K562 (cell line): ENCODE measurements at regions of chr13 and their contacts with region 1.

Region 1: GRCh38 chr13:108033800-108034707 is 181.3 kb downstream of the LIG4 start:
- DNase-seq: no peak
- ATAC-seq: no peak
- H3K4me3 ChIP-seq: no peak overlapping the region
- H3K27ac ChIP-seq: no peak overlapping the region
- H3K4me1 ChIP-seq: no peaks in the 10 kb centered on the region
- H3K27me3 ChIP-seq: no peaks in the 10 kb centered on the region
- CTCF ChIP-seq: no peak
- EP300 ChIP-seq: no peak
- POLR2A ChIP-seq: no peak
- RAD21 ChIP-seq: no peak

Region 2: DNA sequence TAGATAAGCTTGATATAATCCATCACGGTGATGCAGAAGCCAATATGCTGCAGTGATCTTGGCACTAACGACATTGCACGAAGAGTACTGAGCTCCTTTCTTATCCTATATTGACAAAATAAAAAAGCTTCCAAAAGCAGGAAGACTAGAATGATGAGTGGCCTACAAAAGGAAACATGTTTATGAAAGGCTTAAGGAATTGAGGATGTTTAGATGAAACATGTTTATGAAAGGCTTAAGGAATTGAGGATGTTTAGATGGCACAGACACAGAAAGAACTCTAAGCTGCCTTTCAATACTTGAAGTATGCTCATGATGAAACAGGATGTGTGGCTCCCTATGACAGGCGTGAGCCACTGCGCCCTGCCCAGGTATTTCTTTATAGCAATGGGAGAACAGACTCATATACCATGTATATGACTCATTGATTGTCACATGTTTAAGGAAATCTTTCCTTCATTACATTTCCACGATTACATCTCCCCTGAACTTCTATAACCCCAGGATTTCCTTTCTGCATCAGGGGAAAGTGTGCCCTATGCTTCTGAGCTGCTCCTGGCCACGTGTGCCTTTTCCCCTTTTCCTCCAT is 775.4 kb before region 1 on chr13:
- CTCF ChIA-PET with region 1: no interaction called
- POLR2A ChIA-PET with region 1: no interaction called
- in situ Hi-C with region 1: loop called (anchors 10 kb)
- intact Hi-C with region 1: no loop called
- DNase-seq: no peak
- ATAC-seq: no peak
- H3K4me3 ChIP-seq: no peak overlapping the region
- H3K27ac ChIP-seq: no peak overlapping the region
- H3K4me1 ChIP-seq: no peaks in the 10 kb centered on the region
- H3K27me3 ChIP-seq: no peaks in the 10 kb centered on the region
- CTCF ChIP-seq: no peak
- EP300 ChIP-seq: no peak
- POLR2A ChIP-seq: no peak
- RAD21 ChIP-seq: no peak

Region 3: GRCh38 chr13:107807306-107808073 is 226.6 kb before region 1 on chr13:
- CTCF ChIA-PET with region 1: no interaction called
- POLR2A ChIA-PET with region 1: no interaction called
- in situ Hi-C with region 1: no loop called
- intact Hi-C with region 1: no loop called
- DNase-seq: no peak
- ATAC-seq: no peak
- H3K4me3 ChIP-seq: no peak overlapping the region
- H3K27ac ChIP-seq: no peak overlapping the region
- H3K4me1 ChIP-seq: no peaks in the 10 kb centered on the region
- H3K27me3 ChIP-seq: no peaks in the 10 kb centered on the region
- CTCF ChIP-seq: no peak
- EP300 ChIP-seq: no peak
- POLR2A ChIP-seq: no peak
- RAD21 ChIP-seq: no peak

Region 4: GRCh38 chr13:108200781-108201398 is 166.8 kb after region 1 on chr13:
- CTCF ChIA-PET with region 1: no interaction called
- POLR2A ChIA-PET with region 1: no interaction called
- in situ Hi-C with region 1: no loop called
- intact Hi-C with region 1: no loop called
- DNase-seq: no peak
- ATAC-seq: no peak
- H3K4me3 ChIP-seq: no peak overlapping the region
- H3K27ac ChIP-seq: no peak overlapping the region
- H3K4me1 ChIP-seq: no peaks in the 10 kb centered on the region
- H3K27me3 ChIP-seq: no peaks in the 10 kb centered on the region
- CTCF ChIP-seq: no peak
- EP300 ChIP-seq: no peak
- POLR2A ChIP-seq: no peak
- RAD21 ChIP-seq: no peak

Region 5: DNA sequence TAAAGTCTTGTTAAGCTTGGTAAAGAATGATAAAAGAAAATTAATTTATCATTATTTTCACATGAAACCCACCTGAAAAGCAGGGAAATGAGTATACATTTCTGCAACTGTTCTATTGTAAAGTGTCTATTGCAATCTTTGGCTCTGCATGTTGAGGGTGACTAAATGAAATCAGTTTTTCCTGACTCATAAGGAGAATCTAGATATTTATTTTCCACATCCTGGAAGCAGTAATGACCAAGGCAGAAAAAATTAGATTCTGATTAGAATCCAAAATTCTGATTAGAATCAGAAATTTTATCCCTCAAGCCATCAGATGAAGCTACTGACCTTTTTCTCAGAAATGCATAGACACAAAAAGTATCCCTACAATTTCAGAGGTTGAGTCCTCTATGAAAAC is 773.8 kb after region 1 on chr13:
- CTCF ChIA-PET with region 1: no interaction called
- POLR2A ChIA-PET with region 1: no interaction called
- in situ Hi-C with region 1: no loop called
- intact Hi-C with region 1: no loop called
- DNase-seq: no peak
- ATAC-seq: no peak
- H3K4me3 ChIP-seq: no peak overlapping the region
- H3K27ac ChIP-seq: no peak overlapping the region
- H3K4me1 ChIP-seq: no peaks in the 10 kb centered on the region
- H3K27me3 ChIP-seq: no peaks in the 10 kb centered on the region
- CTCF ChIP-seq: no peak
- EP300 ChIP-seq: no peak
- POLR2A ChIP-seq: no peak
- RAD21 ChIP-seq: no peak